PC-9 (cell line): ENCODE measurements at regions of chr9 and their contacts with region 1.

Region 1: DNA sequence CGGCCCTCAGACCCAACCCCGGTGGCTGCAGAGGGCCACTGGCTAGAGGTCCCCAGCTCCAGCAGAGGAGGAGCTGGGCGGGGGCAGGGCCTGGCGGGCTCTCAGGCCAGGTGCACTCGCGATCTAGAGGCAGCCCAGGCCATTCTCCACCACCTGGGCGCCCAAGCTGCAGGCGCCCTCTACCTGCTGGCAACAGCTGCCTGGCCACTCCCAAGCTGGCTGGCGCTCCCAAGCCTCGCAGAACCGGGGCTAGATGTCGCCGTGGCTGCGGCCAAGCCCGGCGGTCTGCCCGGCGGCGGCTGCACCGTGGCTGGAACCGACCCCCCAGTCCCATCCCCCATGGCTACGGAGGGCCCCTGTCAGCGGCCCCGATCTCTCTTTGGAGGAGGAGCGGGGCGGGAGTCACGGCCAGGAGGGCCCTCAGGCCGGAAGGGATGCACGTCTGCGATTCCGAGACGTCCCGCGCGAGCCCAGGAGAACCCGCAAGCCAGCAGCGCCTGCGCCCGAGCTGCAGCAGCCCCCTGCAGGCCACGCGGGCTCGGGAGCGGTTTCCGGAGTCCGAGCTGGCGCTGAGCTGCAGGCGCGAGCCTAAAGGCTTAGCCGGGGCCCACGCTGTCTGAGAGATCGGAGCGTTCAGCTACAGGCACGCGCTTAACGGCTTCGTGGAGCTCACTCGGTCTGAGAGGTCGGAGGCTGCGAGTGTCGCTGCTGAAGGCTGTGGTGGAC is 44.3 kb upstream of the BICD2 start:
- DNase-seq: peak; percentile 58 to 88
- H3K4me3 ChIP-seq: peak overlapping the region; percentile 53; the same call in 1 of the 2 replicates
- H3K27ac ChIP-seq: no peak overlapping the region
- H3K4me1 ChIP-seq: no peaks in the 10 kb centered on the region
- H3K27me3 ChIP-seq: no peaks in the 10 kb centered on the region
- CTCF ChIP-seq: peak; percentile 29; the same call in 1 of the 2 replicates

Region 2: DNA sequence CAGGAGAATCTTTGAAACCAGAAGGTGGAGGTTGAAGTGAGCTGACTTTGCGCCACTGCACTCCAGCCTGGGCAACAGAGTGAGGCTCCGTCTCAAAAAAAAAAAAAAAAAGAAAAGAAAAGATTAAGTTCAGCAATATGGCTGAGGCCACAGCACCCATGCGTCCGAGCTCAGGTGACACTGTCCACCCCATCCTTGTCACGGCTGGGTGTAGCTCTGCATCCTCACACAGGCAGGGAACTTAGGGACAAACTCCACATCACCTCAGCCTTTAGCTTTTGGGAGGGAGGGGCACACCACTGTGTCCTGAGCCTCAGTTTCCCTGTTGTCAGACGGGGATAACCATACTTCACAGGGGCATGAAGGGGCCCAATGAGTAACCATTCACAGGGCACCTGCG is 154.0 kb after region 1 on chr9:
- CTCF ChIA-PET with region 1: no interaction called
- POLR2A ChIA-PET with region 1: interaction called, 20 read pairs
- intact Hi-C with region 1: no loop called
- DNase-seq: no peak
- H3K4me3 ChIP-seq: no peak overlapping the region
- H3K27ac ChIP-seq: no peak overlapping the region
- H3K4me1 ChIP-seq: peaks cover 6% of the 10 kb centered on the region; the same call in 1 of the 2 replicates
- H3K27me3 ChIP-seq: no peaks in the 10 kb centered on the region
- CTCF ChIP-seq: no peak

Region 3: GRCh38 chr9:93003552-93004407 is 194.9 kb after region 1 on chr9:
- CTCF ChIA-PET with region 1: no interaction called
- POLR2A ChIA-PET with region 1: no interaction called
- intact Hi-C with region 1: no loop called
- DNase-seq: peak; percentile 58 to 72
- H3K4me3 ChIP-seq: no peak overlapping the region
- H3K27ac ChIP-seq: peak overlapping the region; percentile 62
- H3K4me1 ChIP-seq: peaks cover 13% of the 10 kb centered on the region
- H3K27me3 ChIP-seq: no peaks in the 10 kb centered on the region
- CTCF ChIP-seq: peak; percentile 79

Region 4: GRCh38 chr9:94300548-94301301 is 1491.8 kb after region 1 on chr9:
- CTCF ChIA-PET with region 1: no interaction called
- POLR2A ChIA-PET with region 1: no interaction called
- intact Hi-C with region 1: no loop called
- DNase-seq: no peak
- H3K4me3 ChIP-seq: no peak overlapping the region
- H3K27ac ChIP-seq: no peak overlapping the region
- H3K4me1 ChIP-seq: no peaks in the 10 kb centered on the region
- H3K27me3 ChIP-seq: no peaks in the 10 kb centered on the region
- CTCF ChIP-seq: no peak